Mucosa of descending colon (tissue), 3 donors: ENCODE measurements at regions of chr11 and their contacts with region 1.

Region 1: DNA sequence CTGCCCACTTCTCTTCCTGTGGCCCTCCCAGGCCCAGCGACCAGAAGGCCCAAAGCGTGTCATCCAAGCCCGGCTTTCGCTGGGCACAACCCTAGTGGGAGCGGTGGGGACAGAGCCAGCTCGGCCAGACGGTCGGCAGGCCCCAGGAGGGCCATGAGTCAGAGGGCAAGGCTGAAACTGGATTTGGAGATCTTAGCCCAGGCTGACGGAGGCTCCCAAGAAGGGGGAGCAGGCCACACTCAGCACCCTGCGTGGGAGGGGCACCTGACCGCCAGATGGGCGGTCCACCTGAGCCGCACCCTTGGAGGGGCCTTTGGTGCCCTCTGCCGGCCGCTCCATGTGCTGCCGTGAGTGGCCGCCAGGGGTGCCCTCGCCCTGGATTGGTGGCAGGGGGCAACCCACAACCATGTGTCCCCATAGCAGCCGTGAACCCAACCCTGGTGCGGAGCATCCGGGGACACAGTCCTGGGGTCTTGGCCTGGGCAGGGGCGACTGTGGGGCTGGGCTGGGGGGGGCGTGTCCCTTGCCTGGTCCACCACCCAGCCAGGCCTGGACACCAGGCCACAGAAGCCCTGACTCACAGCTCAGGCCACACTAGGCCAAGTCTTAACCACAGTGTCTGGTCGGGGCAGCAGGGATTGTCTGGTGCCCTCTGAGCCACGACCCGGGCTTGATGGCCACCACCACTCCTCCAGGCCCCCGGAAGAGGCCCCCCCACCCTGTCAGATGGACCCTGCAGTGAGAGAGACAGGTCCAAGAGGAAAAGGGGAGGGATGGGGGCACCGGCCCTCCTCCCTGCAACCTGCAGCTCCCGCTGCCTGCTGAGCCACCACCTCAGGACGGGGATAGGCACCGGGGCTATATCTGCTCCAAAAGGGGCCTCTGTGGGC is 19.2 kb upstream of the TALDO1 start:
- DNase-seq: peak; percentile 88 to 91 (median 91)
- ATAC-seq: peak; percentile 80
- H3K4me3 ChIP-seq: no peak overlapping the region
- H3K4me1 ChIP-seq: peaks cover 24% of the 10 kb centered on the region
- CTCF ChIP-seq: peak; percentile 98

Region 2: DNA sequence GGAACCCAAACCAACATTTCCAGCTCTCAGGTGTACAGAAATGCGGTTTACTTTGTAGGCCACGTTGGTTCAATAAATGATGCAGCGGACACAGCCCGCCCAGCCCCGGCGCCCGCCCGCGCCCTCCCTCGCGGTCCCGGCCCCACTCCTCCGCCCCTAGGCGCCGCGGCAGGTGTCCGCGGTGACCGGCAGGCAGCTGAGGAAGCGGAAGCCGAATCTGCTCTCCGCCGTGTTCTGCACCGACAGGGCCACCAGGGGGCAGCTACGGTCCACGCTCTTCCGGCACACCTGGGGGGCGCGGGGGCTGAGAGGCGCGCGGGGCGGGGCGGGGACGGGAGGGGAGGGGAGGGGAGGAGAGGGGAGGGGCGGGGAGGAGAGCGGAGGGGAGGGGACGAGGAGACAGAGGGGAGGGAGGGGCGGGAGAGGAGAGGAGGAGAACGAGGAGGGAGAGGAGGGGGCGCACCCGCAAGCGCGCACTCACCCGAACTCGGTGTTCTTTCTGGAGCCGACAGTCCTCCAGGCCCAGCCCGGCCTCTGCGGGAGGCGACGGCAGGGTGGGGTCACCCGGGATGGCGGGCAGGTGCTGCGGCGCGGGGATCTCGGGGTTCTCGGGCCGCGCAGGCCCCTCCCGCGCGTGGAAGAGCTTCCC is 173.2 kb before region 1 on chr11:
- intact Hi-C with region 1: loop called (anchors 10 kb)
- DNase-seq: peak; percentile 80 to 87 (median 86)
- ATAC-seq: peak; percentile 82
- H3K4me3 ChIP-seq: no peak overlapping the region
- H3K4me1 ChIP-seq: peaks cover 25% of the 10 kb centered on the region
- CTCF ChIP-seq: peak; percentile 41

Region 3: DNA sequence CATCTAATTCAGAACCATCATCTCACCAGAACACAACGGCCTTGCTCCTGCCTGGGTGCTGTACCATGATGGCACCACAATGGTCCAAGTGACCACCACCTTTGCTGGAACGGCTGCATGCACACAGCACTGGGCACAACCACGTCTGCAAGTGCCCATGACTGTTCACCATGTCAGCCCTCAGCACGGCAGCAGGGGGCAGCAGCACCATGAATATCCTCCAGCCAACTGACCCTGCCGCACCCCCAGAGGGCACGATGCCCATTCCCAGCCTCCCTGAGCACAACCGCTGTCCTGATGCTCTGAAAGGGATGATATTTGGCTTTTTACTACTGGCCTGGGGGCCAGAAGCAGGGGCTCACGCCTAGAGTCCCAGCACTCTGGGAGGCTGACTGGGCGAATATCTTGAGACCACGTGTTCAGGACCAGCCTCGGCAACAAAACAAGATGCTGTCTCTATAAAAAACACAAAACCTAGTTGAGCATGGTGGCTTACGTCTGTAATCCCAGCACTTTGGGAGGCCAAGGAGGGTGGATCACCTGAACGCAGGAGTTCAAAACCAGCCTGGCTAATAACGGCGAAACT is 65.3 kb before region 1 on chr11:
- intact Hi-C with region 1: loop called (anchors 5 to 10 kb)
- DNase-seq: peak; percentile 72 to 86 (median 83)
- ATAC-seq: peak; percentile 94
- H3K4me3 ChIP-seq: no peak overlapping the region
- H3K4me1 ChIP-seq: no peaks in the 10 kb centered on the region
- CTCF ChIP-seq: peak; percentile 66

Region 4: GRCh38 chr11:1514336-1515061 is 786.4 kb after region 1 on chr11:
- intact Hi-C with region 1: no loop called
- DNase-seq: peak in 1 of 3 donors; percentile 31
- ATAC-seq: no peak
- H3K4me3 ChIP-seq: no peak overlapping the region
- H3K4me1 ChIP-seq: peaks cover 10% of the 10 kb centered on the region
- CTCF ChIP-seq: no peak